H1 (cell line): ENCODE measurements at regions of chrX and their contacts with region 1.

Region 1: DNA sequence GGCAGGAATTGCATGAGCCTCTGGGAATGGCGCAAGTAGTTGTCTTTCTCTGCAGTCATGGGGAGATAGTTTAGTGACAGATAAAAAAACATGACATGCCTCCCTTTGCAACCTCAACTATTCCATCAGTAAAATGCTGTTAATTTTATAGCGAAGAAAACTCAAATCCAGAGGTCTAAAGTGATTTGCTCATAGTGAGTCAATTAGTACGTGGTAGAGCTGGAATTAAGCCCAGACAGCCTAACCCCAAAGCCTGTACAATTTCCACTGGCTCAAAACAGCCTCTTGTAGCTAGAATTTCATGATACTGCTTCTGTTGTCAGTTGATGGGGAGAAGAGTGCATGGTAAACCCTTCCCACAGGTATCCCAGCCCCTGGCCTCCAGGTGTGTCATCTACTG is 81.3 kb upstream of the TRPC5 start:
- DNase-seq: no peak
- H3K4me3 ChIP-seq: no peak overlapping the region
- H3K27ac ChIP-seq: no peak overlapping the region
- H3K4me1 ChIP-seq: peaks cover 0 to 15% (median 0%) of the 10 kb centered on the region in 4 experiments; a peak in 3 of 7 replicates
- H3K27me3 ChIP-seq: no peaks in the 10 kb centered on the region
- CTCF ChIP-seq: no peak
- EP300 ChIP-seq: no peak
- POLR2A ChIP-seq: no peak
- RAD21 ChIP-seq: no peak

Region 2: GRCh38 chrX:112067601-112068000 is 96.3 kb before region 1 on chrX:
- CTCF ChIA-PET with region 1: no interaction called
- POLR2A ChIA-PET with region 1: no interaction called
- DNase-seq: no peak
- H3K4me3 ChIP-seq: no peak overlapping the region
- H3K27ac ChIP-seq: no peak overlapping the region
- H3K4me1 ChIP-seq: no peaks in the 10 kb centered on the region
- H3K27me3 ChIP-seq: no peaks in the 10 kb centered on the region
- CTCF ChIP-seq: no peak
- EP300 ChIP-seq: no peak
- POLR2A ChIP-seq: no peak
- RAD21 ChIP-seq: no peak

Region 3: DNA sequence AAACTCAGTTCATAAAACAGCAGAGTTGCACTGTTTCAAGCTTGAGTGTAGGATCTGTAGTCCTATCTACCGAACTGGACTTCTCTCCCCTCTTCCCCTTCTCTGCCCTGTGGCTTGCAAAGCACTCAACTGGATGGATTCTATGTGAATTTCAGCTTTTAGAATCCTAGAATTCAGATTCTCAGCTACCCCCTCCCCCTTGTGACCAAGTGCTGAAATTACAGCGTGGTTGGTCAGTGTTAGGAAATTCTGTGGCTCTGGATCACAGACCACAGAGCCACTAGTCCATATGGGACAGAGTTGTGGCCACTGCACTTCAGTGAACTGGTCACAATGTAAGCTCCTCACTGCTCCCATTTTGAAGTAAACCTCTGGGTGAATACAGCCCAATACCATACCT is 16.7 kb before region 1 on chrX:
- CTCF ChIA-PET with region 1: interaction called, 12 read pairs
- POLR2A ChIA-PET with region 1: no interaction called
- DNase-seq: peak in 1 of 2 experiments; percentile 45
- H3K4me3 ChIP-seq: no peak overlapping the region
- H3K27ac ChIP-seq: no peak overlapping the region
- H3K4me1 ChIP-seq: no peaks in the 10 kb centered on the region
- H3K27me3 ChIP-seq: no peaks in the 10 kb centered on the region
- CTCF ChIP-seq: peak in 2 of 3 experiments; percentile 42 to 53; a peak in 3 of 4 replicates
- EP300 ChIP-seq: no peak
- POLR2A ChIP-seq: no peak
- RAD21 ChIP-seq: peak; percentile 52 to 68

Region 4: DNA sequence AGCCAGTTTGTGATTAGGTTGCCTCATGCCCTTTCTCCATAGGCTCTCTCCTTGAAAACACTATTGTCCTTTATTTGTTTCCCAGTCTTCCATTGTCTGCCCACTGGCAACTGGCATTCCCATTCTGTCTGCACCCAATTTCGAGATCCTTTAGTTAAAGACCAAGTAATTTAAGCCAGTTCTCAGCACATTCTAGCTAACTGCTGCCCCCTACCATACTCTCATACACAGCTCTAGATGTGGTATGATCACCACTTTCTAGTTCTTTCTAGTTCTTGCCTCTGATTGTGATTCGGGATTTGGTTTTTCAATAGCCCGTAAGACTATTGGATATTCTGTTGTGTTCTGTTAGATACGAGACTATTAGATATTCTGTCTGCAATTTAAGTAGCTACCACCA is 54.5 kb after region 1 on chrX:
- CTCF ChIA-PET with region 1: no interaction called
- POLR2A ChIA-PET with region 1: no interaction called
- DNase-seq: no peak
- H3K4me3 ChIP-seq: no peak overlapping the region
- H3K27ac ChIP-seq: no peak overlapping the region
- H3K4me1 ChIP-seq: no peaks in the 10 kb centered on the region
- H3K27me3 ChIP-seq: no peaks in the 10 kb centered on the region
- CTCF ChIP-seq: peak in 1 of 3 experiments; percentile 21; a peak in 1 of 4 replicates
- EP300 ChIP-seq: no peak
- POLR2A ChIP-seq: no peak
- RAD21 ChIP-seq: peak; percentile 32 to 46